Right cardiac atrium (tissue), 5 donors: ENCODE measurements at regions of chr9 and their contacts with region 1.

Region 1: GRCh38 chr9:91279296-91280204 is 82.2 kb downstream of the AUH start:
- DNase-seq: no peak
- ATAC-seq: no peak
- H3K4me3 ChIP-seq: no peak overlapping the region
- H3K27ac ChIP-seq: no peak overlapping the region
- H3K4me1 ChIP-seq: no peaks in the 10 kb centered on the region
- H3K27me3 ChIP-seq: no peaks in the 10 kb centered on the region

Region 2: DNA sequence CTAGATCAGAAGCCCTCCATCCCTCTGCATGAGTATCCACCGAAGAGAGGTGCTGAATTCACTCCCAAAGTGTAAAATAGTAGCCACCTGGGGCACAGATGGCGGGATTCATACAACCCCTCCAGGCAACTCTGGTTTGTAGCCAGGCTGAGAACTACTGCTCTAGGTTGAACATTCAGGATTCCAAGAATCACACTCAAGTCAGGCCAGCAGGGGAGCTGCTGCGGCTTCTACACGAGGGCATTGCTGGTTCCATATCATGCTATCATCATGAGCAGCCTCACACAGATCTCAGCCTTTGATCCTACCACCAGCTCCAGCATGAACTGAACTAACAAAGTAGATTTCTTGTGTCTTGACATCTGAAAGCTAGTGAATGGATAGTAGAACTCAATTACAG is 1004.8 kb before region 1 on chr9:
- intact Hi-C with region 1: no loop called
- DNase-seq: no peak
- ATAC-seq: no peak
- H3K4me3 ChIP-seq: no peak overlapping the region
- H3K27ac ChIP-seq: no peak overlapping the region
- H3K4me1 ChIP-seq: no peaks in the 10 kb centered on the region
- H3K27me3 ChIP-seq: no peaks in the 10 kb centered on the region

Region 3: DNA sequence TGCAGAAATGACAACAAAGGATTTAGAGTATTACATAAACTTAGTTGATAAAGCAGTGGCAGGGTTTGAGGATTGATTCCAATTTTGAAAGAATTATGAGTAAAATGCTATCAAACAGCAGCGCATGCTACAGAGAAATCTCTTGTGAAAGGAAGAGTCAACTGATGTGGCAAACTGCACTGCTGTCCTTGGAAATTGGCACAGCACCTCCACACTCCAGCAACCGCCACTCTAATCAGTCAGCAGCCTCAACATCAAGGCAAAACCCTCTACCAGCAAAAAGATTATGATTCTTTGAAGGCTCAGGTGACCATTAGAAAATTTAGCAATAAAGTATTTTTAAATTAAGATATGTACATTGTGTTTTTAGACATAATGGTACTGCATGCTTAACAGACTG is 15.8 kb after region 1 on chr9:
- intact Hi-C with region 1: loop called in 1 of 4 experiments (anchors 2 kb)
- DNase-seq: no peak
- ATAC-seq: no peak
- H3K4me3 ChIP-seq: no peak overlapping the region
- H3K27ac ChIP-seq: no peak overlapping the region
- H3K4me1 ChIP-seq: peaks cover 1% of the 10 kb centered on the region
- H3K27me3 ChIP-seq: no peaks in the 10 kb centered on the region

Region 4: DNA sequence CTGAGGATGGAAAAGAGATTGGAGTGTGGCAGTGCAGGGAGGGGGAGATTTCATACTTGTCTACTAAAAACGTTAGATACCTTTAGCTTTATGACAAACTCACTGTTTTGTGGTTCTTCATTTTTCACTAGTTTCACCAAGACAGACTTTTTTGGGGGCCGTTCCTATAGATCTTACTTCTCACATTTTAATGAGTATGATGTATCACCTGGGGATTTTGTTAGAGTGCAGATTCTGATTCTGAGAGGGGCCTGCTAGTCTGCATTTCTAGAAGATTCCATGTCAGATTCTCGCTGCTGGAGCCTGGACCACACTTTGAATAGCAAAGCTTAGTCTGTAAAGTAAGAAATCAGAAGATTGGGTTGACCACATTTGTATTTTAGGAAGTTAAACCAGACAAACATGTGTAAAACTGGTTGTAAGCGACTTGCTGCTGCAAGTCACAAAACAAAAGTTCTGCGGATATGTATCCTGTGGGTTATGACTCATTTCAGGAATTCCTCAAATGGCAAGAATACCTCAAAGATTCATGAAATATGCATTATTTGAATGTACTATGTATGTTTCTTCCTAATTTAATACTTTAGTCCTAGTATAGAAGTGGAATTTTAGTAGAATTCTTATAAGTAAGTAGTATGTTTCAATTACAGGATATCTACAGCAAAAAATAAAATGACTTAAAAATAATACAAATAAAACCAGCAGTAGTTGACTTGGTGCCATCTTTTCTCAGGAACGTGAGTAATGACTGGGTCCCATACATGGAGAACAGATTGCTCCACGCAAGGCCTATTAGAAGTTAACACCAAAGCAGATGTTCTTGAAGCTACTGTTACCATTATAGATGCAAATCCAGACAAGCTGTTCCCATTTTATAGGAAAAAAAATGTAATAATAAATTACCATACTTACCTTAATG is 116.3 kb after region 1 on chr9:
- intact Hi-C with region 1: no loop called
- DNase-seq: no peak
- ATAC-seq: no peak
- H3K4me3 ChIP-seq: no peak overlapping the region
- H3K27ac ChIP-seq: no peak overlapping the region
- H3K4me1 ChIP-seq: no peaks in the 10 kb centered on the region
- H3K27me3 ChIP-seq: no peaks in the 10 kb centered on the region